Activated T-helper 2 cell treated with anti-CD3 and anti-CD28 coated beads, Interferon-gamma antibody, Interleukin-2, Interleukin-4, amounts not matched to agents 10 μg/mL and 5 μg/mL and 100 μg/mL, durations not matched to agents 14 hours and 24 hours and 36 hours (primary cell): ENCODE measurements at regions of chr2 and their contacts with region 1.

Region 1: DNA sequence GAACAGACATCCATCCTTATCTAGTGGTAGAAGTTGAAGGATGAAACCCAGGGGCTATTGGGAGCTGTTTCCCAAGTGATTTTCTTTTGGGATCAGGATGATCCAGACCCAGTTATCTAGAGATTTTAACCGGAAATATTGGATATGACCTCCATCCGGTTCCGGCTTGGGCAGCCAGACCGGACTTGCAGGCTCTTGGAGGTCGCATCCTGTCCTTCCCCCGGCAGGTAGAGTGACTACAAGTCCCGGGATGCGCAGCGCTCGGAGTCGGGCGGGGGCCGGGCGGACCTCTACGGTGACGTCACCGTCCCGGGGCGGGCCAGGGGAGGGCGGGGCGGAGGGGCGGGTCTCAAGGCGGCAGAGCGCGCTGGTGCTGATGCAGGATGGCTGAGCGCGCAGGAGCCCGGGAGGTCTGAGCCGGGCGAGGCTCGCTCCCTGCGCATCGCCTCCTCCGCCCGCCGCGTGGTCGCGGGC is at the start of gene KIF5C:
- DNase-seq: peak; percentile 73
- H3K4me3 Mint-ChIP-seq: peak within 1 kb of the TSS; percentile 84
- H3K27ac Mint-ChIP-seq: peak within 1 kb of the TSS; percentile 49
- H3K4me1 Mint-ChIP-seq: peaks cover 14% of the 10 kb centered on the region
- H3K27me3 Mint-ChIP-seq: peaks cover 21% of the 10 kb centered on the region
- total RNA-seq, gene KIF5C: 12.9 and 17.3 TPM in 2 replicates

Region 2: GRCh38 chr2:148020111-148021058 is 854.5 kb before region 1 on chr2 and contains the start of gene ORC4:
- intact Hi-C with region 1: loop called (anchors 1 kb)
- DNase-seq: peak; percentile 94
- H3K4me3 Mint-ChIP-seq: peak within 1 kb of the TSS; percentile 100
- H3K27ac Mint-ChIP-seq: peak within 1 kb of the TSS; percentile 93
- H3K4me1 Mint-ChIP-seq: peaks cover 44% of the 10 kb centered on the region
- H3K27me3 Mint-ChIP-seq: no peaks in the 10 kb centered on the region
- total RNA-seq, gene ORC4: 25.4 and 31.2 TPM in 2 replicates

Region 3: GRCh38 chr2:148813603-148814065 is 61.3 kb before region 1 on chr2:
- intact Hi-C with region 1: loop called (anchors 1 kb)
- DNase-seq: peak; percentile 41
- H3K4me3 Mint-ChIP-seq: no peak overlapping the region
- H3K27ac Mint-ChIP-seq: peak overlapping the region; percentile 8
- H3K4me1 Mint-ChIP-seq: peaks cover 20% of the 10 kb centered on the region
- H3K27me3 Mint-ChIP-seq: peaks cover 16% of the 10 kb centered on the region

Region 4: GRCh38 chr2:148926291-148926961 is 51.5 kb after region 1 on chr2:
- intact Hi-C with region 1: loop called (anchors 1 kb)
- DNase-seq: peak; percentile 51
- H3K4me3 Mint-ChIP-seq: peak overlapping the region; percentile 82
- H3K27ac Mint-ChIP-seq: peak overlapping the region; percentile 83
- H3K4me1 Mint-ChIP-seq: peaks cover 27% of the 10 kb centered on the region
- H3K27me3 Mint-ChIP-seq: no peaks in the 10 kb centered on the region

Region 5: DNA sequence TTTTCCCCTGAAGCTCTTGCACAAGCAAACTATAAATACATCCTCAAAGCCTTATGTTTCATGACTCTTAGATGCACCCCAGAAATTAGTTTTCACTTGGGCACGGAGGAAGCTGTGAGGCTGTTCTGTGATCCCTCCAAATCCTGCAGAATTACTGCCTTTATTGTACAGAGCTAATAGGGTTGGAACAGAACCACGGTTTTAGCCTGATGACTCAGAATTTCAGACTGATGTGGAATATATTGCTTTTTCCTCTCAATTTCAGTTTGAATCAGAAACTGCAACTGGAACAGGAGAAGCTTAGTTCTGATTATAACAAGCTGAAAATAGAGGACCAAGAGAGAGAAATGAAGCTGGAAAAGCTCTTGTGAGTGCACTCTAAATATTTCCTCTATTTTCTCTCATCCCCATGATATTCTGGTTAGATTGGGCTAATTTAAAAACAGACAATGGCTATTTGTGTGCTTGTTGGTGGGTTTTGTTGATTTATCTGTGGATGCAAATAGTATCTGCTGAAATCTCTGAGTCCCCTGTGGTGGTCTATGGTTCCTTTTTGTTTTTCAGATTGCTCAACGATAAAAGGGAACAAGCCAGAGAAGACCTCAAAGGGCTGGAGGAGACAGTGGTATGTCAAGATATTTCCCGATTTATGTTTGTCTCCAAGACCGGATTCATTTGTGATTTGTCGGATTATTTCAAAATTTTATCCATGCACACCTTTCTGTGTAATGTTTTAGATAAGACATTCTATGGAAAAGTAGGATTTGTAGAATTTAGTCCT is 125.4 kb after region 1 on chr2:
- intact Hi-C with region 1: loop called (anchors 5 kb)
- DNase-seq: no peak
- H3K4me3 Mint-ChIP-seq: no peak overlapping the region
- H3K27ac Mint-ChIP-seq: no peak overlapping the region
- H3K4me1 Mint-ChIP-seq: peaks cover 11% of the 10 kb centered on the region
- H3K27me3 Mint-ChIP-seq: no peaks in the 10 kb centered on the region

Region 6: GRCh38 chr2:149375801-149376361 is 501.0 kb after region 1 on chr2:
- intact Hi-C with region 1: no loop called
- DNase-seq: no peak
- H3K4me3 Mint-ChIP-seq: no peak overlapping the region
- H3K27ac Mint-ChIP-seq: no peak overlapping the region
- H3K4me1 Mint-ChIP-seq: no peaks in the 10 kb centered on the region
- H3K27me3 Mint-ChIP-seq: no peaks in the 10 kb centered on the region